Activated CD4-positive, alpha-beta T cell treated with anti-CD3 and anti-CD28 coated beads for 36 hours (primary cell): ENCODE measurements at regions of chr20 and their contacts with region 1.

Region 1: GRCh38 chr20:20457392-20458126 is 89.7 kb downstream of the INSM1 start:
- DNase-seq: peak; percentile 41
- ATAC-seq: peak; percentile 61
- H3K4me3 Mint-ChIP-seq: no peak overlapping the region
- H3K27ac Mint-ChIP-seq: no peak overlapping the region
- H3K4me1 Mint-ChIP-seq: peaks cover 43% of the 10 kb centered on the region
- H3K27me3 Mint-ChIP-seq: no peaks in the 10 kb centered on the region

Region 2: GRCh38 chr20:20480689-20481088 is 23.1 kb after region 1 on chr20:
- CTCF ChIA-PET with region 1: no interaction called
- POLR2A ChIA-PET with region 1: no interaction called
- intact Hi-C with region 1: loop called in 1 of 2 experiments (anchors 1 kb)
- DNase-seq: no peak
- ATAC-seq: peak; percentile 85
- H3K4me3 Mint-ChIP-seq: no peak overlapping the region
- H3K27ac Mint-ChIP-seq: peak overlapping the region; percentile 28
- H3K4me1 Mint-ChIP-seq: peaks cover 42% of the 10 kb centered on the region
- H3K27me3 Mint-ChIP-seq: no peaks in the 10 kb centered on the region

Region 3: GRCh38 chr20:20549718-20550117 is 92.2 kb after region 1 on chr20:
- CTCF ChIA-PET with region 1: no interaction called
- POLR2A ChIA-PET with region 1: no interaction called
- intact Hi-C with region 1: no loop called
- DNase-seq: no peak
- ATAC-seq: peak; percentile 40
- H3K4me3 Mint-ChIP-seq: no peak overlapping the region
- H3K27ac Mint-ChIP-seq: no peak overlapping the region
- H3K4me1 Mint-ChIP-seq: peaks cover 36% of the 10 kb centered on the region
- H3K27me3 Mint-ChIP-seq: no peaks in the 10 kb centered on the region

Region 4: GRCh38 chr20:21571841-21572690 is 1114.5 kb after region 1 on chr20:
- CTCF ChIA-PET with region 1: no interaction called
- POLR2A ChIA-PET with region 1: no interaction called
- intact Hi-C with region 1: no loop called
- DNase-seq: peak; percentile 25
- ATAC-seq: no peak
- H3K4me3 Mint-ChIP-seq: no peak overlapping the region
- H3K27ac Mint-ChIP-seq: no peak overlapping the region
- H3K4me1 Mint-ChIP-seq: peaks cover 6% of the 10 kb centered on the region
- H3K27me3 Mint-ChIP-seq: peaks cover 12% of the 10 kb centered on the region